ENCODE measurements at regions of chr17 and their contacts with region 1.

Region 1: GRCh38 chr17:44218344-44219107 is 949 bp downstream of the UBTF start:
- DNase-seq: peak; percentile 93
- ATAC-seq: peak; percentile 46
- H3K4me3 ChIP-seq: peak overlapping the region; percentile 61 to 87 (median 74)
- H3K4me3 Mint-ChIP-seq: peak overlapping the region; percentile 84
- H3K27ac ChIP-seq: peak overlapping the region; percentile 88 to 89
- H3K27ac Mint-ChIP-seq: peak overlapping the region; percentile 98
- H3K4me1 ChIP-seq: peaks cover 49 to 53% of the 10 kb centered on the region in 2 donors
- H3K4me1 Mint-ChIP-seq: peaks cover 56% of the 10 kb centered on the region
- H3K27me3 ChIP-seq: no peaks in the 10 kb centered on the region
- H3K27me3 Mint-ChIP-seq: no peaks in the 10 kb centered on the region
- CTCF ChIP-seq: peak; percentile 52

Region 2: DNA sequence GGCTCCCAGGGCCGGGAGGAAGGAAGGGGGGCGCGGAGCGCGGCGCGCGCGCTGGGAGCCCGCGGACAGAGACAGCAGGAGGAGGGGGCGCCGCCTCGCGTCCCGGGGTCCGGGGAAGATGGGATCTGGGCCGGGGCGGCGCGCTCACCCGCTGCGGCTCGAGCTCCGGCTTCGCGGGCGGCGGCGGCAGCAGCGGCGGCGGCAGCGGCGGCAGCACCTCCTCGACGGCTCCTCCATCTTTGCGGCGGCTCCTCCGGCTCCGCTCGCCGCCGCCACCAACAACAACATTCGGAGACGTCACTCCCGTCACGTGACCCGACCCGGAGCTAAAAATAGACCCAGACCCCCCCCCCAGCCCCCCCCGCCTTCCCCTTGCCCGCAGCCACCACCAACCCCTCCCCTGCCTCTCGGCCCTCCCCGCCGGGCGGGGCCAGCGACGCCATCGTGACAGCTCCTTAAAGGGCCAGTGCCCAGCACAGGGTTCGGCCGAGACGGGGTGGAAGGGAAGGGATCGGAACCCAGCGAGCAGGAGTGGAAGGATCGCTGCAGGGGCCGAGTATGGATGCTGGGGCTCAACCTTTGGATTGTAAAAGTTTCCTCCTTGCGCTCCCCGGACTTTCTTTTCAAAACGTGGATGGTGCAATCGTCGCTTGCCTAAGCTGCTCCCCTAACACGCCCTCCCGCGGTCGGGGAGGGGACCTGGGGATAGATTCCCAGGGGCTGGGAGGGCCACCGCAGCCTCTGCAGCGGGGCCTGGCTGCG is 95.0 kb before region 1 on chr17 and contains the start of gene HDAC5:
- CTCF ChIA-PET with region 1: interaction called, 9 read pairs
- POLR2A ChIA-PET with region 1: interaction called, 11 read pairs
- intact Hi-C with region 1: no loop called
- DNase-seq: peak; percentile 95
- ATAC-seq: peak; percentile 97
- H3K4me3 ChIP-seq: peak within 1 kb of the TSS; percentile 71 to 98 (median 85)
- H3K4me3 Mint-ChIP-seq: peak within 1 kb of the TSS; percentile 95
- H3K27ac ChIP-seq: peak within 1 kb of the TSS; percentile 43 to 90
- H3K27ac Mint-ChIP-seq: peak within 1 kb of the TSS; percentile 99
- H3K4me1 ChIP-seq: peaks cover 18 to 26% of the 10 kb centered on the region in 2 donors
- H3K4me1 Mint-ChIP-seq: peaks cover 45% of the 10 kb centered on the region
- H3K27me3 ChIP-seq: no peaks in the 10 kb centered on the region
- H3K27me3 Mint-ChIP-seq: no peaks in the 10 kb centered on the region
- CTCF ChIP-seq: peak; percentile 76
- total RNA-seq, gene HDAC5: 104 and 113 TPM in 2 replicates

Region 3: DNA sequence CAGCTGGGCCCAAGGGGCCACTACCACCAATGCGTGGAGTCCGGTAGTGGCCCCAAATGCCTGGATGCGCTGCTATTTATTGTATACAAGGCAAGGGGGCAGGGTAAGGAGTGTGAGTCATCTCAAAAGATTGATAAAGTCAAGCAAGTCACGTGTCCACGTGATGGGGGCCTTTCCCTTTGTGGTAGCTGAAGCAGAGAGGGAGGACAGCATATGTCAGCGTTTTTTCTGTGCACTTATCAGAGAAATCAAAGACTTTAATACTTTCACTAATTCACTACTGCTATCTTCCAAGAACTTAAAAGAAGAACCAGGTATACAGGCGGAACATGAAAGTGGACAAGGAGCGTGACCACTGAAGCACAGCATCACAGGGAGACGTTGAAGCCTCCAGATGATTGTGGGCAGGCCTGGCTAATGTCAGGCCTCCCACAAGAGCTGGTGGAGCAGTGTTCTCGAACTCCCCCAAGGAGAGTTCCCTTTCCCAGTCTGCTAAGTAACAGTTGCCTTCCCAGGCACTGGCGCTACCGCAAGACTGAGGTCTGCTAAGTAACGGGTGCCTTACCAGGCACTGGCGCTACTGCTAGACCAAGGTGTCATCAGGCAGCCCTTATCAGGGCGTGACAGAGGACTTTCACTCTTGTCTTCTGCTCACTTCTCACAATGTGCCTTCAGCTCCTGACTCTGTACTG is 58.9 kb before region 1 on chr17:
- CTCF ChIA-PET with region 1: no interaction called
- POLR2A ChIA-PET with region 1: interaction called, 10 read pairs
- intact Hi-C with region 1: no loop called
- DNase-seq: no peak
- ATAC-seq: no peak
- H3K4me3 ChIP-seq: no peak overlapping the region
- H3K4me3 Mint-ChIP-seq: no peak overlapping the region
- H3K27ac ChIP-seq: no peak overlapping the region
- H3K27ac Mint-ChIP-seq: no peak overlapping the region
- H3K4me1 ChIP-seq: no peaks in the 10 kb centered on the region
- H3K4me1 Mint-ChIP-seq: no peaks in the 10 kb centered on the region
- H3K27me3 ChIP-seq: no peaks in the 10 kb centered on the region
- H3K27me3 Mint-ChIP-seq: no peaks in the 10 kb centered on the region
- CTCF ChIP-seq: no peak

Region 4: GRCh38 chr17:44199553-44200477 is 18.7 kb before region 1 on chr17 and contains the start of gene ATXN7L3:
- CTCF ChIA-PET with region 1: interaction called, 9 read pairs
- POLR2A ChIA-PET with region 1: interaction called, 100 read pairs
- intact Hi-C with region 1: loop called (anchors 1 kb)
- DNase-seq: peak; percentile 100
- ATAC-seq: peak; percentile 81
- H3K4me3 ChIP-seq: peak within 1 kb of the TSS; percentile 66 to 83 (median 81)
- H3K4me3 Mint-ChIP-seq: peak within 1 kb of the TSS; percentile 88
- H3K27ac ChIP-seq: peak within 1 kb of the TSS; percentile 89 to 90
- H3K27ac Mint-ChIP-seq: peak within 1 kb of the TSS; percentile 95
- H3K4me1 ChIP-seq: peaks cover 30 to 43% of the 10 kb centered on the region in 2 donors
- H3K4me1 Mint-ChIP-seq: peaks cover 46% of the 10 kb centered on the region
- H3K27me3 ChIP-seq: no peaks in the 10 kb centered on the region
- H3K27me3 Mint-ChIP-seq: no peaks in the 10 kb centered on the region
- CTCF ChIP-seq: no peak
- total RNA-seq, gene ATXN7L3: 107 and 119 TPM in 2 replicates

Region 5: DNA sequence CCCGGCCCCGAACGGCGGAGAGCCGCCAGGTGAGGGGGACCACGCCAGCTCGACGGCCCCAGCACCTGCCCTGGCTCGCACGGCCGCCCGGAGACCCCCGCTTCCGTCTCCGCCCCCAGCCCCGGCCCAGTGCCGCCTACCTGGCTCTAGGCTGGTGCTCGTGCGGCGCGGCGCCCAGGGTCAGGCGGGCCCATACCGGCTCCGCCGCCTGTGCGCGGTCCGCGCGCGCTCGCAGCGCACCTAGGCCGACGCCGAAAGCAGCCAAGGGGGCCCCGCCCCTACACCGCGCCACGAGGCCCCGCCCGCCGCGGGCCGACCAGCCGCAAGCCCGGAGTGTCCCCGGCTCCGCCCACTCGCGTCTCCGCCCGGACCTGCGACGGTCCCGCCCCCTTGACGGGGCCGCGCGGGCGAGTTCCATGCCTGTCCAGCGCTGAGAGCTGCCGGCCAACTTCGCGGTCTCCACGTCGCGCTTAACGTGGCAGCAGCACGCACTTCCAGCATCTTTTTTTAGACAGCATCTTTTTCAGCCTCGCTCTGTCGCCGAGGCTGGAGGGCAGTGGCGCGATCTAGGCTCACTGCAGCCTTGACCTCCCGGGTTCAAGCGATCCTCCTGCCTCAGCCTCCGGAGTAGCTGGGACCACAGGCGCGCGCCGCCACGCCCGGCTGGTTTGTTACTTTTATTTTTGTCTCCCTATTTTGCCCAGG is 106.2 kb after region 1 on chr17 and contains the start of gene SLC25A39:
- CTCF ChIA-PET with region 1: interaction called, 13 read pairs
- POLR2A ChIA-PET with region 1: interaction called, 29 read pairs
- intact Hi-C with region 1: loop called (anchors 1 kb)
- DNase-seq: peak; percentile 97
- ATAC-seq: peak; percentile 72
- H3K4me3 ChIP-seq: peak within 1 kb of the TSS; percentile 35 to 85 (median 81)
- H3K4me3 Mint-ChIP-seq: peak within 1 kb of the TSS; percentile 92
- H3K27ac ChIP-seq: peak within 1 kb of the TSS; percentile 92 to 96
- H3K27ac Mint-ChIP-seq: peak within 1 kb of the TSS; percentile 98
- H3K4me1 ChIP-seq: peaks cover 9 to 30% of the 10 kb centered on the region in 2 donors
- H3K4me1 Mint-ChIP-seq: peaks cover 31% of the 10 kb centered on the region
- H3K27me3 ChIP-seq: no peaks in the 10 kb centered on the region
- H3K27me3 Mint-ChIP-seq: no peaks in the 10 kb centered on the region
- CTCF ChIP-seq: no peak
- total RNA-seq, gene SLC25A39: 86.6 and 88.4 TPM in 2 replicates

Region 6: DNA sequence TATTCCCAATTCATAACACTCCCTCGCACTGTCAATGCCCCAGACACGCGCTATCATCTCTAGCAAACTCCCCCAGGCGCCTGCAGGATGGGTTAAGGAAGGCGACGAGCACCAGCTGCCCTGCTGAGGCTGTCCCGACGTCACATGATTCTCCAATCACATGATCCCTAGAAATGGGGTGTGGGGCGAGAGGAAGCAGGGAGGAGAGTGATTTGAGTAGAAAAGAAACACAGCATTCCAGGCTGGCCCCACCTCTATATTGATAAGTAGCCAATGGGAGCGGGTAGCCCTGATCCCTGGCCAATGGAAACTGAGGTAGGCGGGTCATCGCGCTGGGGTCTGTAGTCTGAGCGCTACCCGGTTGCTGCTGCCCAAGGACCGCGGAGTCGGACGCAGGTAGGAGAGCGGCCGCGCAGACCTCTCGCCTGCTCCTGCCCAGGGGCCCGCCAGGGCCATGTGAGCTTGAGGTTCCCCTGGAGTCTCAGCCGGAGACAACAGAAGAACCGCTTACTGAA is 126.5 kb after region 1 on chr17 and contains the start of gene GRN:
- CTCF ChIA-PET with region 1: interaction called, 98 read pairs
- POLR2A ChIA-PET with region 1: interaction called, 19 read pairs
- intact Hi-C with region 1: loop called (anchors 1 kb)
- DNase-seq: peak; percentile 91
- ATAC-seq: peak; percentile 76
- H3K4me3 ChIP-seq: peak within 1 kb of the TSS; percentile 61 to 94 (median 91)
- H3K4me3 Mint-ChIP-seq: peak within 1 kb of the TSS; percentile 96
- H3K27ac ChIP-seq: peak within 1 kb of the TSS; percentile 85 to 89
- H3K27ac Mint-ChIP-seq: peak within 1 kb of the TSS; percentile 90
- H3K4me1 ChIP-seq: peaks cover 37 to 52% of the 10 kb centered on the region in 2 donors
- H3K4me1 Mint-ChIP-seq: peaks cover 45% of the 10 kb centered on the region
- H3K27me3 ChIP-seq: no peaks in the 10 kb centered on the region
- H3K27me3 Mint-ChIP-seq: no peaks in the 10 kb centered on the region
- CTCF ChIP-seq: no peak
- total RNA-seq, gene GRN: 185 and 187 TPM in 2 replicates

Region 7: GRCh38 chr17:45148183-45149036 is 929.9 kb after region 1 on chr17 and contains the start of gene HEXIM1:
- CTCF ChIA-PET with region 1: no interaction called
- POLR2A ChIA-PET with region 1: interaction called, 11 read pairs
- intact Hi-C with region 1: no loop called
- DNase-seq: peak; percentile 100
- ATAC-seq: peak; percentile 74
- H3K4me3 ChIP-seq: peak within 1 kb of the TSS; percentile 69 to 99 (median 85)
- H3K4me3 Mint-ChIP-seq: peak within 1 kb of the TSS; percentile 91
- H3K27ac ChIP-seq: peak within 1 kb of the TSS; percentile 97 to 98
- H3K27ac Mint-ChIP-seq: peak within 1 kb of the TSS; percentile 99
- H3K4me1 ChIP-seq: peaks cover 38 to 66% of the 10 kb centered on the region in 2 donors
- H3K4me1 Mint-ChIP-seq: peaks cover 61% of the 10 kb centered on the region
- H3K27me3 ChIP-seq: no peaks in the 10 kb centered on the region
- H3K27me3 Mint-ChIP-seq: no peaks in the 10 kb centered on the region
- CTCF ChIP-seq: no peak
- total RNA-seq, gene HEXIM1: 48.9 and 49.6 TPM in 2 replicates

Measured in B cell (primary cell).